Mammary epithelial cell (primary cell): ENCODE measurements at regions of chr6 and their contacts with region 1.

Region 1: DNA sequence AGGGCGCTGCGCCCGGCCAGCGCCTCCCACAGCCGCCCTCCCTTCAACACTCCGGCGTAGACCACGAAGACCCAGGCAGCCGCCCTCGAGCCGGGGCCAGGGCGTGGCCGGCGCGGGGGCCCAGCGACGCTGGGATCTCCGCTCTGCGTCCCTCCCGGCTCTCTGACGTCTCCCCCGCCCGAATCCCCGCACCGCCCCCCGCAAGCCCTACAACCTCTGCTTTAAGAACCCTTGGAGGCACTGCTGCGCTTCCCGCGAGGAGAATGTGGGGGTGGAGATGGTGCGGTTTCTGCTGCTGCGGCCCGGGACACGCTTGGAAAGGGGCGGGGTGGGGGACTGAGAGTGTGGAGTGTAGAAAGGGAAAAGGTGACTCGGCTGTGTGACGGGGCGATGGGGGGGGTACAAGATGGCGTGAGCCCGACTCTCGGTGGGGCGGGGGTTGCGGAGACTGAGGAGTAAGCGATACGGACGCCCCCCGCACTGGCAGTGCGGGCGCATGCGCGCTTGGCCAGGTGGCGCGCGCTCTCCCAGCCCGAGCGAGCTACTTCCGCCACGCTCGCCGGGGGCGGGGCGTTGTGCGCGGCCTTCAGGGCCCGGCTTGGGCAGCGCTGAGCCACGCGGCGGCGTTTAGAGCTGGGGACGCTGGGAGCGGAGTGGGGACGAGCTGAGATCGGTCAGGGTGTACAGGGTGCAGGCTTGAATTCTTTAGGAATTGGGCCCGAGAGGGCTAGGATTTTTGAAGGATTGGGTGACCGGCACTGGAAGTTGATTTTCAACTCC is at the start of gene SUPT3H:
- DNase-seq: peak; percentile 90
- H3K4me3 ChIP-seq: peak within 1 kb of the TSS; percentile 72 to 83 (median 79)
- H3K27ac ChIP-seq: peak within 1 kb of the TSS; percentile 81
- H3K4me1 ChIP-seq: peaks cover 15% of the 10 kb centered on the region
- H3K27me3 ChIP-seq: no peaks in the 10 kb centered on the region
- CTCF ChIP-seq: peak in 1 of 2 donors; percentile 48
- total RNA-seq, gene SUPT3H: 7.3 to 8.3 TPM

Region 2: DNA sequence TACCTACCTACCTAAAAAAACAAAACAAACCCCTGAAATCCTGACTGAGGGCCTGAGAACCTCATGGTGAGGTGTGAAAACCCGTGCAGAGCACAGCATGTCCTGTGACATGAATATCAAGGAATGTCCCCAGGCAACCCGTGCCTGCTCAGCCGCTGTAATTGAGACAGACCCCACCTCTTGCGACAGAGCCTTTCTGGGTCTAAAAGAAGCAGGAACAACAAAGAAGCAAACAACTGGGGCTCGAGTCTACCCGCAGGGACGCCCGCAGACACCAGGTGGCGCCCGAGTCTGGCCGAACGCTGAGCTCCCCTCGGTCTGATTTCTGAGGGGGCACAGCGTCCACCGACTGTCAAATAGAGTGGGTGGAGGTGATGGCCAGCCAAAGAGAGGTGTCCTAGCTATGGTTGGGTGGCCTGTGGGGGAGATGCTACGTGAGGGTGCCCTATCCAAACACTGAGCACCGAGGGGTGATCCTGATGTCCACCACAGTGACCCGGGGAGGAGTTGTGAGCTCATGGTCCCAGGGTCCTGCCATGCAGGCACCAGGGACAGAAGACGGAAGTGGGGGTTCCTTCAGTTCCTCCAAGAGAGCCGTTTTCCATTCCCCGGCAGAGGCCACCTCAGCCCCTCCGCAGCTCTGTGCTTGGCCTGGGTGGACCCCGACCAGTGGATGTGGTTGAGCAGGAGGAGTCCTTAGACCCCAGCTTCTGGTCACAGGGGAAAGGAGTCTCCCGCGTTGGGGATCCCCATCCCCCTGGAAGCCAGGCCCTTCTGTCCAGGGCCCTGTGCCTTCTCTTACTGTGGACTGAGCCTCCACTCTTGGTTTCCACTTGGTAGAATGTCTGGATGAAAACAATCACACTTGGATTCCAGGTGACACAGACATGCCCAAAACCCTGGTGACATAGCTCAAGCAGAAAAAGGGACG is 722.1 kb before region 1 on chr6:
- CTCF ChIA-PET with region 1: no interaction called
- dilution Hi-C with region 1: no loop called
- in situ Hi-C with region 1: no loop called
- intact Hi-C with region 1: loop called (anchors 1 kb)
- DNase-seq: peak; percentile 22
- H3K4me3 ChIP-seq: no peak overlapping the region
- H3K27ac ChIP-seq: no peak overlapping the region
- H3K4me1 ChIP-seq: peaks cover 9% of the 10 kb centered on the region
- H3K27me3 ChIP-seq: no peaks in the 10 kb centered on the region
- CTCF ChIP-seq: peak; percentile 88 to 93

Region 3: GRCh38 chr6:45619994-45620471 is 242.3 kb after region 1 on chr6:
- CTCF ChIA-PET with region 1: no interaction called
- dilution Hi-C with region 1: no loop called
- in situ Hi-C with region 1: no loop called
- intact Hi-C with region 1: loop called (anchors 5 kb)
- DNase-seq: no peak
- H3K4me3 ChIP-seq: no peak overlapping the region
- H3K27ac ChIP-seq: no peak overlapping the region
- H3K4me1 ChIP-seq: peaks cover 18% of the 10 kb centered on the region
- H3K27me3 ChIP-seq: no peaks in the 10 kb centered on the region
- CTCF ChIP-seq: no peak